Body of pancreas (tissue), 4 donors: ENCODE measurements at regions of chr1 and their contacts with region 1.

Region 1: GRCh38 chr1:26009796-26010460 is 11.6 kb upstream of the EXTL1 start:
- DNase-seq: no peak
- ATAC-seq: no peak
- H3K4me3 ChIP-seq: no peak overlapping the region
- H3K27ac ChIP-seq: no peak overlapping the region
- H3K4me1 ChIP-seq: peaks cover 16% of the 10 kb centered on the region
- H3K27me3 ChIP-seq: no peaks in the 10 kb centered on the region
- CTCF ChIP-seq: no peak
- POLR2A ChIP-seq: no peak

Region 2: GRCh38 chr1:25837262-25837875 is 172.6 kb before region 1 on chr1:
- intact Hi-C with region 1: loop called (anchors 10 kb)
- DNase-seq: peak in 1 of 4 donors; percentile 59
- ATAC-seq: peak; percentile 93
- H3K4me3 ChIP-seq: no peak overlapping the region
- H3K27ac ChIP-seq: peak overlapping the region in 3 of 4 donors; percentile 13 to 52 (median 26)
- H3K4me1 ChIP-seq: peaks cover 14% of the 10 kb centered on the region
- H3K27me3 ChIP-seq: no peaks in the 10 kb centered on the region
- CTCF ChIP-seq: peak; percentile 38 to 81 (median 73)
- POLR2A ChIP-seq: no peak

Region 3: GRCh38 chr1:26066857-26067256 is 56.9 kb after region 1 on chr1:
- intact Hi-C with region 1: no loop called
- DNase-seq: peak in 1 of 4 donors; percentile 49
- ATAC-seq: no peak
- H3K4me3 ChIP-seq: no peak overlapping the region
- H3K27ac ChIP-seq: no peak overlapping the region
- H3K4me1 ChIP-seq: peaks cover 11% of the 10 kb centered on the region
- H3K27me3 ChIP-seq: no peaks in the 10 kb centered on the region
- CTCF ChIP-seq: no peak
- POLR2A ChIP-seq: no peak